HAP-1 (cell line): ENCODE measurements at regions of chr18 and their contacts with region 1.

Region 1: DNA sequence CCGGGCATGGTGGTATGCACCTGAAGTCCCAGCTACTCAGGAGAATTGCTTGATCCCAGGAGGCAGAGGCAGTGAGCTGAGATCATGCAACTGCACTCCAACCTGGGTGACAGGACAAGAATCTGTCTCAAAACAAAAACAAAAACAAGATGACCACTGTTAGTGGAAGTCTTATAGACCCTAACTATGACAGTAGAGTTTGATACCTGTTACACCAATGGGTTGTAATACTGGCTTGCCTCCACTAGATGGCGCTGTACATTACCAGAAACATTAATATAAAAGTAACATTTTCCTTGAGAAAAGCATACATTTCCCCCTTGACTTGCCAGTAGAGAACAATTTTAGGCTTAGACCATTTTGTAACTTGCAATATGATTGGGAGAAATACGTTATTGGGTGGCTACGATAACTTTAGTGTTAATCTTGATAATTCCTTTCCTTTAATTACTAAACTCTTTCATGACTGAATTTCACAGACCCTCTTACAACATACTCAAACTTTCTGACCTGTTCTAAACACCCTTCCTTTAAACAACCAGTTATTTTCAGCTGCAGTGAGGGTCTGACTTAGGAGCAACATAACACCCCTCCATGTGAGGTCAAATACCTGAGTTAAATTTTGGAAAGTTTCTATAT is 19.5 kb downstream of the SLC25A52 start:
- DNase-seq: peak; percentile 51 to 75
- H3K4me3 ChIP-seq: no peak overlapping the region
- H3K4me1 ChIP-seq: peaks cover 19% of the 10 kb centered on the region
- H3K27me3 ChIP-seq: no peaks in the 10 kb centered on the region

Region 2: GRCh38 chr18:31819925-31820229 is 78.7 kb after region 1 on chr18:
- in situ Hi-C with region 1: loop called (anchors 10 kb)
- DNase-seq: no peak
- H3K4me3 ChIP-seq: no peak overlapping the region
- H3K4me1 ChIP-seq: no peaks in the 10 kb centered on the region
- H3K27me3 ChIP-seq: no peaks in the 10 kb centered on the region

Region 3: GRCh38 chr18:31954349-31954748 is 213.1 kb after region 1 on chr18:
- in situ Hi-C with region 1: loop called (anchors 25 kb)
- DNase-seq: no peak
- H3K4me3 ChIP-seq: no peak overlapping the region
- H3K4me1 ChIP-seq: peaks cover 12% of the 10 kb centered on the region
- H3K27me3 ChIP-seq: no peaks in the 10 kb centered on the region

Region 4: GRCh38 chr18:31980863-31981262 is 239.6 kb after region 1 on chr18:
- in situ Hi-C with region 1: no loop called
- DNase-seq: no peak
- H3K4me3 ChIP-seq: no peak overlapping the region
- H3K4me1 ChIP-seq: peaks cover 3% of the 10 kb centered on the region; the same call in 1 of the 2 replicates
- H3K27me3 ChIP-seq: no peaks in the 10 kb centered on the region

Region 5: GRCh38 chr18:32081881-32082280 is 340.7 kb after region 1 on chr18:
- in situ Hi-C with region 1: no loop called
- DNase-seq: no peak
- H3K4me3 ChIP-seq: no peak overlapping the region
- H3K4me1 ChIP-seq: peaks cover 13% of the 10 kb centered on the region
- H3K27me3 ChIP-seq: no peaks in the 10 kb centered on the region